Motor neuron (in vitro differentiated cells): ENCODE measurements at regions of chr5 and their contacts with region 1.

Region 1: GRCh38 chr5:8247049-8247899 is 378.3 kb downstream of the MTRR start:
- ATAC-seq: peak in 3 of 8 experiments; percentile 48 to 72 (median 57)
- H3K4me3 ChIP-seq: no peak overlapping the region
- H3K27ac ChIP-seq: no peak overlapping the region
- H3K4me1 ChIP-seq: no peaks in the 10 kb centered on the region

Region 2: GRCh38 chr5:7927466-7928375 is 319.6 kb before region 1 on chr5:
- in situ Hi-C with region 1: loop called in 1 of 9 experiments (anchors 25 kb)
- ATAC-seq: peak; percentile 78 to 90 (median 84)
- H3K4me3 ChIP-seq: no peak overlapping the region
- H3K27ac ChIP-seq: no peak overlapping the region
- H3K4me1 ChIP-seq: peaks cover 0 to 9% of the 10 kb centered on the region in 2 donors

Region 3: GRCh38 chr5:8457187-8458037 is 210.1 kb after region 1 on chr5:
- in situ Hi-C with region 1: loop called in 1 of 9 experiments (anchors 10 kb)
- ATAC-seq: peak; percentile 35 to 96 (median 93)
- H3K4me3 ChIP-seq: peak overlapping the region in 4 of 5 donors; percentile 33 to 96 (median 59)
- H3K27ac ChIP-seq: peak overlapping the region in 1 of 2 donors; percentile 73
- H3K4me1 ChIP-seq: peaks cover 0 to 10% of the 10 kb centered on the region in 2 donors

Region 4: GRCh38 chr5:8773046-8773615 is 525.9 kb after region 1 on chr5:
- in situ Hi-C with region 1: no loop called
- ATAC-seq: no peak
- H3K4me3 ChIP-seq: no peak overlapping the region
- H3K27ac ChIP-seq: no peak overlapping the region
- H3K4me1 ChIP-seq: peaks cover 0 to 3% of the 10 kb centered on the region in 2 donors